Caki2 (cell line): ENCODE measurements at regions of chr3 and their contacts with region 1.

Region 1: DNA sequence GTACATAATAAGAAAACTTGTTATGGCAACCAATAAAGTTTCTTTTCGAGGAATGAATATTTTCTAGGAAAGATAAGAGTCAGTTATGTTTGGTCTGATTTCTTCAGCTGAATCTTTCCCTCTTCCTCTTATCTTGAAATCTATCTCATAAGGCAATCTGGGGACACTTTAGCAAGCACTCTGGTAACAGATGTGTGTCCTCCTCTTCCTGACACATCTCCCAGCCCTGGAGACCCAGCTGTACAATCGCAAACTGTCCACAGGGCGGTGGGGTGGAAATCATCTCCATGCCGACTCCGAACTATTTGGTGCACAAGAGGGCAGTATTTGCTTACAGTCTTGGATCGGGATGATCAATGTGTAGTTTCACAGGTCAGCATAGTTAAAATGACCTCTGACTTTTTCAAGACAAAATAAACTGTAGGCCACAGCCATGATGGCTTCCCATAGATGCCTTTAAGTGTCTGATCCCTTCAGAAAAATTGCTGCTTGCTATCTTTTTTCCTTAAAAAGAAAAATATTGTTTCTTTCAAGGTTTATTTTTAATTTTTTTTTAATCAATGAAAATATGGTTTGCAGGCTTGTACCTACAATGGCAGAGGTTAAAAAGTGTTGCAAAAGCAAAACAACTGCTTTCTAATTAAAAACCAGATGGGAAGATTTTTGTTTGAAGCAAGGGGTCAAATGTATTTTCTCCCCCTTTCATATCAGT is 17.7 kb downstream of the EEFSEC start:
- DNase-seq: peak; percentile 60

Region 2: GRCh38 chr3:128503164-128503651 is 332.2 kb after region 1 on chr3:
- in situ Hi-C with region 1: loop called (anchors 10 kb)
- DNase-seq: no peak